ENCODE measurements at regions of chr15 and their contacts with region 1.

Region 1: GRCh38 chr15:64355944-64356709 is at the start of gene CSNK1G1:
- DNase-seq: peak; percentile 97
- total RNA-seq, gene CSNK1G1: 15.8 to 15.9 TPM

Region 2: GRCh38 chr15:62624547-62625378 is 1731.4 kb before region 1 on chr15:
- intact Hi-C with region 1: loop called in 1 of 2 experiments (anchors 10 kb)
- DNase-seq: no peak

Region 3: DNA sequence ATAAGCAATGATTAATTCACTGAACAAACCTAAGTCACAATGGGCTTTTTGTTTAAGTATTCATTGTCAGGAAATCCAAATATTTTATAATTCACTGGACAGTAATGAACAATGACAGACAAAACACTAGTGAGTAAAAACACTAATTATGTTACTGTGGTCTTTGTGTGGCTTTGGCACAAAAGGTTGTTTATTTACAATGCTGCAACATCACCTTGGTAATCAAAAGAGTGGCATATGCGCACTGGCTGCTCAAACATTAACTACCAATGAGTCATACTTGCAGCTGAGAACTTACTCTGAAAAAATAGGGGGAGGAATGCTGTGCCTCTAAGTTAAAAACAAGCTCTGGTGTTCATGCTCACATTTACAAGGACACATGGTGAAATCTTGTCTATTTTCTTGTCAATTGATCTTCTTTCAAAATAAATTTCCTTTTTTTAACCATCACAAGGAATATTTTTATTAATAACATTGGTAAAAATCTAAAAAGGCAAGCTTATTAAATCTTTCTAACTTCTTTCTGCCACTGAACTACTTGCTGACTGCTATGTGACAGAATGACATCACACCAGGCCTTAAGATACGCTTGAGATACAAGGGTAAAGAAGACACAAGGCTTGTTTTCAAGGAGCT is 108.1 kb before region 1 on chr15:
- intact Hi-C with region 1: no loop called
- DNase-seq: no peak